Motor neuron (in vitro differentiated cells): ENCODE measurements at regions of chr2 and their contacts with region 1.

Region 1: GRCh38 chr2:101419096-101419663 is 31.9 kb upstream of the CREG2 start:
- ATAC-seq: peak in 3 of 8 experiments; percentile 86 to 93 (median 87)
- H3K4me3 ChIP-seq: no peak overlapping the region
- H3K27ac ChIP-seq: no peak overlapping the region
- H3K4me1 ChIP-seq: peaks cover 17 to 18% of the 10 kb centered on the region in 2 donors

Region 2: GRCh38 chr2:100161945-100162620 is 1257.1 kb before region 1 on chr2:
- in situ Hi-C with region 1: no loop called
- ATAC-seq: no peak
- H3K4me3 ChIP-seq: no peak overlapping the region
- H3K27ac ChIP-seq: no peak overlapping the region
- H3K4me1 ChIP-seq: no peaks in the 10 kb centered on the region

Region 3: DNA sequence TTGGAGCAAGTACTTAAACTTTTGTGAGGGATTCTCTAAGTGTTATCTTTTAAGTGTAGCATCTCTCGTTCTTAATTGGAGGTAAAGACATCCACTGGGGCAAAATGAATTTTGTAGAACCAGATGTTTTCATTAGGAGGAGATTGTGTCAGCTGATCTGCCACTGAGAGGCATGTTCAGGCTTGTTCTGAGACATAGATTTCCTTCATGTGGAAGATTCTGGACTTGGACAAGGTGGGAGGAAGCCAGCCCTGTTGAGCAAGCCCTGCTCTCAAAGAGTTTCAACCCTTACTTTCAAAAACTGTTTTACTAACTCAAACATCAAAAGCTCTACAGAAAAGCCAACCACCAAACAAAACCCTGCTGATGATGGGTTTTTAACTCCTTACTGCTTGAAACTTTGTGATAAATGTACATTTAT is 284.9 kb after region 1 on chr2:
- in situ Hi-C with region 1: loop called in 1 of 9 experiments (anchors 25 kb)
- ATAC-seq: peak in 4 of 8 experiments; percentile 22 to 75 (median 58)
- H3K4me3 ChIP-seq: no peak overlapping the region
- H3K27ac ChIP-seq: no peak overlapping the region
- H3K4me1 ChIP-seq: peaks cover 14 to 21% of the 10 kb centered on the region in 2 donors

Region 4: DNA sequence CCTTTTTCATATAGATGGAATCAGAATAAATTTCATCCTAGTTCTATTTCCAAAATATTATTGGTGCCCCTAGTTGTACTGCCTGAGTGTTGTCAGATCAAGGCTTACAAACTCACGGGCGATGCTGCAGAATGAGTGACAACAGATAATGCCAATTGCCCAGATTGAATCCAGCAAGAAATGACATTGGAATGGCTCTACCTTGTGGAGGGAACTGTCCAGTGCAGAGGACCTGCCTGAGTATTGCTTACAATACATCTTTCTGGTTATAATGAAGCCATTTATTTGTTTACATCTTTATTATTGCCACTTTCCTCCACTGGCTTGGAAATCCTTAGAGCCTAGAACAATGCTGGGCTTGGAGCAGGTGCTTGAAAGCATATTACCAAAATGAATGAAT is 564.7 kb after region 1 on chr2:
- in situ Hi-C with region 1: loop called in 1 of 9 experiments (anchors 25 kb)
- ATAC-seq: peak; percentile 8 to 59 (median 34)
- H3K4me3 ChIP-seq: no peak overlapping the region
- H3K27ac ChIP-seq: no peak overlapping the region
- H3K4me1 ChIP-seq: peaks cover 4 to 8% of the 10 kb centered on the region in 2 donors